ENCODE measurements at regions of chr10 and their contacts with region 1.

Region 1: DNA sequence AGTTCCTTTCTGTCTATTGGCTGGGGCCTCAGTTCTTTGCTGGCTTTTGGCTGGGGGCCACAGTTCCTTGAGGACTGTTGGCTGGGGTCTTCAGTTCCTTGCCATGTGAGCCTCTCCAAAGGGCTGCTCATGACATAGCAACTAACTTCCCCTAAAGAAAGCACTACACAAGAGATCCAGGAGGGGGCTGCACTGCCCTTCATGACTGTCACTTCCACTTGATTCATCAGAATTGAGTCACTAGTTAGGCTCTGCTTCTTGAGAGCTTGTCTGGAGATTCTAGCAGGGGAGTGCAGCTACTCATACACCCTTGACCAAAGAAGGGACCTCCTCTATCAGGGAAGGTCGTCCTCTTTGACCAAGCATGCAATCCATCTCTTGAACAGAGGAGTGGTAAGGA is 38.0 kb upstream of the MKX start:
- DNase-seq: peak in 1 of 2 donors; percentile 27
- H3K4me3 ChIP-seq: no peak overlapping the region
- H3K27ac ChIP-seq: peak overlapping the region in 1 of 2 donors; percentile 52
- H3K4me1 ChIP-seq: peaks cover 0 to 33% (median 14%) of the 10 kb centered on the region in 4 donors
- H3K27me3 ChIP-seq: no peaks in the 10 kb centered on the region
- CTCF ChIP-seq: peak; percentile 49 to 57

Region 2: GRCh38 chr10:27838361-27838760 is 54.7 kb after region 1 on chr10:
- intact Hi-C with region 1: loop called (anchors 10 kb)
- DNase-seq: no peak
- H3K4me3 ChIP-seq: no peak overlapping the region
- H3K27ac ChIP-seq: peak overlapping the region in 1 of 2 donors; percentile 19
- H3K4me1 ChIP-seq: peaks cover 0 to 20% (median 2%) of the 10 kb centered on the region in 4 donors
- H3K27me3 ChIP-seq: no peaks in the 10 kb centered on the region
- CTCF ChIP-seq: no peak